Gastrocnemius medialis (tissue), 4 donors: ENCODE measurements at regions of chr18 and their contacts with region 1.

Region 1: DNA sequence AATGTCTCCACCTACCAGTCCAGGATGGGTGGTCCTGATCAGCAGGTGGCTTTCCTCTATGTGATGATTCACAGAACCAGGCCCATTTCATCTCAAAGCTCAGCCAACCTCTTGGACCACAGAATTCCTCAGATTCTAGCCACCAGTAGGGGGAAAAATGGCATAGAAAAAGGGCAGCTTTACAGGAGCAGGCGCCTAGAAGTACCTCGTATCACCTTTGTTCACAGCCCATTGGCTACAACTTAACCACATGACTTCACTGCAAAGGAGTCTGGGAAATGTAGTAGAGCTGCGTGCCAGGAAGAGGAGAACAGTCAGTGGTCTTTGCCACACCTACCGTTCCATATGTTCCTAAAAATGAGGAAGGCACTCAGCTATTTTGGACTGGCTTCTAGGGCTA is 62.8 kb upstream of the DTNA start:
- DNase-seq: peak in 1 of 2 donors; percentile 28
- ATAC-seq: peak in 1 of 2 donors; percentile 17
- H3K4me3 ChIP-seq: no peak overlapping the region
- H3K27ac ChIP-seq: peak overlapping the region; percentile 11 to 87 (median 86)
- H3K4me1 ChIP-seq: peaks cover 61 to 68% of the 10 kb centered on the region in 2 donors
- H3K27me3 ChIP-seq: no peaks in the 10 kb centered on the region
- CTCF ChIP-seq: no peak
- POLR2A ChIP-seq: no peak

Region 2: DNA sequence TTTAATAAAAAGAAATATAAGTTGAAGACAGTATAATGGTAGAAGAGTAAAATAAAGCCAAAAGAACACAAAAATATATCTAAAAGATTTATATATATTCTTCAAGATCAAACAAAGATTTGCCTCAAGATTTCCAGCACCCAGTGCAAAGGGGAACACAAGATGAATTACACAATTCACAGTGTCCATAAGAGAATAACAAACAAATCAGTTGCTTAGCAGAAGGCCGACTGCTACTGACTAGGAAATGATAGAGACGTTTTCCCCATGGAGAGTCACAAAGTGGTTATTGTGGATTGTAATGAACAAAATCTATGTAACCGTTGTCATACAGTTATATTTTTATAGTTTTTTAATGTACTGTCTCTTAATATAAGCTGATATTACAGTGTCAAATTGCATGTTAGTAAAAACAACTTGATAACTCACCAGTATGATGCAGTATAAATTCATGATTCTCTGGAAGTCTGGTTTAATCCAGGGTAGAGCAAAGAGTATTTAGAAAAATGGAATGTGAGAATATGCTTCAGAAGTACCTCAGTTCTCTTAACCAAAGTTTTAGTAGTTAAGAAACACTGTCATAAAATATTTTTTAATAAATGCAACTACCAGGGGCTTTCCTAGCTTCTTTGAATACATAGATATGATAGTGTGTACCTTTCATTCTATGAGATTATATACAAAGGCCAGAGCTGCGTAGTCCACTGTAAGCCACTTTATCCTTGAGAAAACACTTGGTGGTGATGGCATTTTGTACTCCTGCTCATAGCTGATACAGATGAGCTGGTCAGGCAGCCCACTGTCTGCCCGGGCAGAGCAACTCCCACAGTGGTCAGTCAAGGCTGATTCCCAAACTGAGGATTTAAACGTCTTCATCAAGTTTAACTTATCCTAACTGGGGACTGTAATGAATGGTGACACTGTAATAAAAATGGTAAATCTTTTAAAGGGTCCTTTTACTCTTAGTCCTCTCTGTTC is 117.6 kb before region 1 on chr18:
- in situ Hi-C with region 1: loop called in 1 of 4 experiments (anchors 25 kb)
- intact Hi-C with region 1: no loop called
- DNase-seq: no peak
- ATAC-seq: peak; percentile 88 to 92
- H3K4me3 ChIP-seq: no peak overlapping the region
- H3K27ac ChIP-seq: peak overlapping the region in 2 of 4 donors; percentile 29 to 38
- H3K4me1 ChIP-seq: peaks cover 21 to 24% of the 10 kb centered on the region in 2 donors
- H3K27me3 ChIP-seq: no peaks in the 10 kb centered on the region
- CTCF ChIP-seq: no peak
- POLR2A ChIP-seq: no peak

Region 3: DNA sequence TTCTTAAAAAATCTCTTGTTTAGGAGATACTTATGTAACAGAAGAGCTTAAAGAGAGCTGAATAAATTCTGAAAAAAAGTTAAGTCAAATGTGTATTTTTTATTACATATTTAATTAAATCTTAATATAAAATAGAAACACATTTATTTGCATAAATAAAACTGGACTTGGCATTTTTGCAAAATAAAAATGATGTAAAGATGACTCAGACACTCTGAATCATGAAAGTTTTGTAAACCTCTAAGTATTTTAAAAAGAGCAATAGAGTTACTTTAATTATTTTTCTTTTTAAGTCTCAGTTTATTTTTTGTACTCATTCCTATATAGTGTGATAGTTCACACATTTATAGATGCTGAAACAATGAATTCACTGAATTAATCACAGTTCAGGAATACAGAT is 47.1 kb before region 1 on chr18:
- in situ Hi-C with region 1: loop called in 2 of 4 experiments (anchors 5 to 10 kb)
- intact Hi-C with region 1: no loop called
- DNase-seq: no peak
- ATAC-seq: no peak
- H3K4me3 ChIP-seq: no peak overlapping the region
- H3K27ac ChIP-seq: peak overlapping the region; percentile 5 to 87 (median 76)
- H3K4me1 ChIP-seq: peaks cover 39 to 47% of the 10 kb centered on the region in 2 donors
- H3K27me3 ChIP-seq: no peaks in the 10 kb centered on the region
- CTCF ChIP-seq: no peak
- POLR2A ChIP-seq: no peak